A673 (cell line): ENCODE measurements at regions of chr12 and their contacts with region 1.

Region 1: DNA sequence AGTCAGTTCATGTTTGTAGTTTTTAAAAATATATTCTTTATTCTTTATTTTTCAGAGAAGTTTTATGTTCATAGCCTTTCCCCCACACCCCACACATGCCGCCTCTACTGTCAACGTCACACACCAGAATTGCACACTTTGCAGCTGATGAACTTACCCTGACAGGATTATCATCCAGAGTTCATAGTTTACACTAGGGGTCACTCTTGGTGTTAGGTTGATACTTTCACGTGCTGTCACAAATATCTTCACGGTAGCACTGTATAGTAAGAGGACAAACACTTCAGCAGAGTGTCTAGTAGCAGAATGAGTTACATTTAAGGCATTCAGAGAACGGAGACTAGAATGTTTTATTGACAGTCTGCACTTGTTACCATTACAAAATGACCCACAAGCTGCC is 5.1 kb downstream of the DPPA3 start:
- DNase-seq: no peak
- H3K4me3 ChIP-seq: no peak overlapping the region
- H3K27ac ChIP-seq: no peak overlapping the region
- H3K4me1 ChIP-seq: no peaks in the 10 kb centered on the region
- H3K27me3 ChIP-seq: no peaks in the 10 kb centered on the region
- CTCF ChIP-seq: 0 out of 2 replicates have a peak, but pooled peaks have one; percentile 15

Region 2: GRCh38 chr12:6230321-6231110 is 1485.9 kb before region 1 on chr12:
- CTCF ChIA-PET with region 1: no interaction called
- POLR2A ChIA-PET with region 1: no interaction called
- intact Hi-C with region 1: no loop called
- DNase-seq: no peak
- H3K4me3 ChIP-seq: no peak overlapping the region
- H3K27ac ChIP-seq: no peak overlapping the region
- H3K4me1 ChIP-seq: no peaks in the 10 kb centered on the region
- H3K27me3 ChIP-seq: no peaks in the 10 kb centered on the region
- CTCF ChIP-seq: no peak

Region 3: DNA sequence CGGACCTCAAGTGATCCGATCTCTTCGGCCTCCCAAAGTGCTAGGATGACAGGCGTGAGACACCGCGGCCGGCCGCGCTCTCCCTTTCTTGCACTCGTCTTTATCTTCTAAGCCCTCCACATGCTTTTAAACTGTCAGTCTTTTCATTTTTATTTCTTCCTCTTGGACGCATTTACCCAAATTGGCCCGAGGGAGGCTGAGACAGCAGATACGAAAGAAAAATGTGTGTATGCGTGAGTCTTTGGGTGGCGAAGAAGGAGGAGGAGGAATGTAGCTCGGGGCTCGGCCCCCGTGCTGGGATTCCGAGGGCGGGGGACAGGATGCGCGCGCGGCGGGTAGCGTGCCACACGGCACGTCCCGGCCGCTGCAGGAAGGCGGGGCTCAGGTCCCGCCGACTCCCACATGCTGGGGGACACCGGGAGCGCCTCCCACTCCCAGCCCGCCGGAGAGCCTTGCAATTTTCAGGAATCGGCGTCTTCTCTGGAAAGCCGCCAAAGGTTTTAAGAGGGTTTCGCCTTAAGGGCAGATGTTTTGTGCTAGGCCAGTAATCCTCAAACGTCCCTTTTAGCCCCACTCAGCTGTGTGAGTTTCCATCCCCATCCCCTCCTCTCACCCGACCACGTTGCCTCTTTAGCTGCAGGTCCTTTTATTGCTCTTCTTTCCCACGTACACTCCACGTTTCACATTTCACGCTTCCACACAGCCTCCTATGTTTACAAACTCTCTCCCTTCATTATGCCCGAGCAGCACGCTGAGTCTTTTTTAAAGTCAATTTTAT is 254.3 kb after region 1 on chr12:
- CTCF ChIA-PET with region 1: no interaction called
- POLR2A ChIA-PET with region 1: interaction called, 10 read pairs
- intact Hi-C with region 1: no loop called
- DNase-seq: peak; percentile 97
- H3K4me3 ChIP-seq: peak overlapping the region; percentile 57
- H3K27ac ChIP-seq: peak overlapping the region; percentile 92
- H3K4me1 ChIP-seq: peaks cover 8% of the 10 kb centered on the region
- H3K27me3 ChIP-seq: no peaks in the 10 kb centered on the region
- CTCF ChIP-seq: 0 out of 2 replicates have a peak, but pooled peaks have one; percentile 14